GM23248 (cell line): ENCODE measurements at regions of chr6 and their contacts with region 1.

Region 1: DNA sequence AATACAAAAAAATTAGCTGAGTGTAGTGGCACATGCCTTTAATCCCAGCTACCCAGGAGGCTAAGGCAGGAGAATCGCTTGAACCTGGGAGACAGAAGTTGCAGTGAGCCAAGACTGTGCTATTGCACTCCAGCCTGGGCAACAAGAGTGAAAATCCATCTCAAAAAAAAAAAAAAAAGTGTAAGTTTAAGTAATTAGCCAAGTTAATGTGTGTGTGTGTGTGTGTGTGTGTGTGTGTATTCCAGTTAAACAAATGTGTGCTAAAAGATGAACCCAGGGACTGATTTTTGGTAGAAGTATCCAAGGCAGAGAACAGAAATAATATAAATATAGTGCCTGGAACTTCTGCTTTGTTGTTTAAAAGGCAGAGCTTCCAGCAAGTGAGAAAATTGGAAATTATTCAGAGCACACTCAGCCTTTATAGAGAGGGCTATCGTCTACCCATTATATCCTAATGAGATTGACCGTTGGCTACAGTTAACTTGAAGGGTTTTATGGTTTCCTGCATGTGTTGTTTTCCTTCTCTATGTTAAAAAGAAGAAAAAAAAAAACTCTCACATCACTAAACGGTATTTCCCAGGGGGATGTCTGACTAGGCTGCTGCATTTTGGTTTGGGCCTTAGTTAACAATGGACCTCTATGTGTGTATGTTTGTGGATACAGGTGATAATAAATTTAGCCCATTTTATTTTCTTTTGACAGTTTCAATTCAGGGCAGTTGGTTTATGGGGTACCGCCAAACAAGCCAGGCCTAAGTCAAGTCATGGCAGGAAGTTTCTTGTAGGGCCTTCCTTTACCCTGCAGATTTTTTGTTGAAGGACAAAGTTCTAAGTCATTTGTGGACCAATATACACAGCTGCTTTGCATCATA is 9.8 kb downstream of the SOX4 start:
- DNase-seq: no peak
- H3K4me3 ChIP-seq: no peak overlapping the region
- H3K27ac ChIP-seq: no peak overlapping the region
- H3K4me1 ChIP-seq: peaks cover 8% of the 10 kb centered on the region
- H3K27me3 ChIP-seq: no peaks in the 10 kb centered on the region

Region 2: DNA sequence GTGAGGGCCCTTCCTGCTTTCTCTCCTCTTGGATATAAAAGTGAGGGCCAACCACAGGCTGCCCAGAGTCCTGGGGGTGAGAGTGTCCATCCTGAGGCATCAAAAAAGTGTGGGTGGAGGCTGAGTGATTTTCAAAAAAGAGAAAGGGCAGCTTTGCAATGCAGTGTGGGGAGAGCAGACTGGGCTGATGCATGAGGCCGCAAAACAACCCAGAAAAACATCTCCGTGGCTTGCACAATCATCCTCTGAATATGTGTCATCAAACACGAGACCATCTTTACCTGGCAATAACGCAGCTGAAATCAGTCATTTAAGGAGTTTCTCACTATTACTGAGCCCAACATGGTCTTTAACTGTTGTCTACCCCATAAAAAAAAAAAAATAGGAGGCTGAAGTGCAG is 200.9 kb before region 1 on chr6:
- in situ Hi-C with region 1: no loop called
- DNase-seq: peak; percentile 83
- H3K4me3 ChIP-seq: no peak overlapping the region
- H3K27ac ChIP-seq: peak overlapping the region; percentile 30
- H3K4me1 ChIP-seq: peaks cover 8% of the 10 kb centered on the region
- H3K27me3 ChIP-seq: no peaks in the 10 kb centered on the region

Region 3: DNA sequence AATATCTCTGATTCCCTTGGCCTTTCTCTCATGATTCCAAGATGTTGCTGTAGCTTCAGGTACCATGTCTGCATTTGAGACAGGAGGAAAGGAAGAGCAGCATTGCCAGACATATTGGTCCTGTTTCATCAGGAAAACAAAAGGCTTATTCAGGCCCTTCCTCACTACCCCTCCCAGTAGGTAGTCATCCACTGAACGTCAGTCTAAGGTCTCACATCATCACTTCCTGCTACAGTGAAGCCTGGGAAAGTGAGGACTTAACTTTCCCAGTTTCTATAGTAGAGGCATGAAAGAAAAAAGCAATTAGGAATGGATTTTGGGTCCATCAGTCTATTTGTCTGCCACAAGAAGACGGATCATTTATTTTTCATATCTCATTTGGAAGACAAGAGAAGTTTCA is 95.5 kb before region 1 on chr6:
- in situ Hi-C with region 1: no loop called
- DNase-seq: no peak
- H3K4me3 ChIP-seq: no peak overlapping the region
- H3K27ac ChIP-seq: no peak overlapping the region
- H3K4me1 ChIP-seq: no peaks in the 10 kb centered on the region
- H3K27me3 ChIP-seq: no peaks in the 10 kb centered on the region

Region 4: DNA sequence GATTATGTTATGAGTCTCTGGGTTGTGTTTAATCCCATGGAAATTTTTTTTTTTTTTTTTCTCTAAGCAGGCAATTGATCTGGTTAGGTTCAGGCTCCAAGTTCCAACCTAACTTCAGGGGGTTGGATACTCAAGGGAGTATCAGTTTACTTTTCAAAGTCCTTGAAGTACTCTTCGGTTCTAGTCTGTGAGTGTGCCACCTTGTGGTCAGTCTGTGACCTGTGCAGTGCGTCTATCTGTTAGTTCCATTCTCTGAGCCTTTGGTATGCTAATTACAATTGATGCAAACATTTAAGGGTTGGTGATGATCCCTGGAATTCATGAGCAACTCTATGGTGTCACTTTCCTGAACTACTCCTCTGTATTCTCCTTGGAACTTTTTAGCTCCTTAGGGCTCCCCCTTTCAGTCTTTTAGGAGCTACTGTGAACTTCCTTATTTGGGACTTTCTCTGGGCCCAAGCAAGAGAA is 332.3 kb after region 1 on chr6:
- in situ Hi-C with region 1: loop called (anchors 10 kb)
- DNase-seq: peak; percentile 72
- H3K4me3 ChIP-seq: no peak overlapping the region
- H3K27ac ChIP-seq: peak overlapping the region; percentile 25; the same call in 1 of the 2 replicates
- H3K4me1 ChIP-seq: peaks cover 14% of the 10 kb centered on the region
- H3K27me3 ChIP-seq: no peaks in the 10 kb centered on the region